ENCODE measurements at regions of chr22 and their contacts with region 1.

Region 1: DNA sequence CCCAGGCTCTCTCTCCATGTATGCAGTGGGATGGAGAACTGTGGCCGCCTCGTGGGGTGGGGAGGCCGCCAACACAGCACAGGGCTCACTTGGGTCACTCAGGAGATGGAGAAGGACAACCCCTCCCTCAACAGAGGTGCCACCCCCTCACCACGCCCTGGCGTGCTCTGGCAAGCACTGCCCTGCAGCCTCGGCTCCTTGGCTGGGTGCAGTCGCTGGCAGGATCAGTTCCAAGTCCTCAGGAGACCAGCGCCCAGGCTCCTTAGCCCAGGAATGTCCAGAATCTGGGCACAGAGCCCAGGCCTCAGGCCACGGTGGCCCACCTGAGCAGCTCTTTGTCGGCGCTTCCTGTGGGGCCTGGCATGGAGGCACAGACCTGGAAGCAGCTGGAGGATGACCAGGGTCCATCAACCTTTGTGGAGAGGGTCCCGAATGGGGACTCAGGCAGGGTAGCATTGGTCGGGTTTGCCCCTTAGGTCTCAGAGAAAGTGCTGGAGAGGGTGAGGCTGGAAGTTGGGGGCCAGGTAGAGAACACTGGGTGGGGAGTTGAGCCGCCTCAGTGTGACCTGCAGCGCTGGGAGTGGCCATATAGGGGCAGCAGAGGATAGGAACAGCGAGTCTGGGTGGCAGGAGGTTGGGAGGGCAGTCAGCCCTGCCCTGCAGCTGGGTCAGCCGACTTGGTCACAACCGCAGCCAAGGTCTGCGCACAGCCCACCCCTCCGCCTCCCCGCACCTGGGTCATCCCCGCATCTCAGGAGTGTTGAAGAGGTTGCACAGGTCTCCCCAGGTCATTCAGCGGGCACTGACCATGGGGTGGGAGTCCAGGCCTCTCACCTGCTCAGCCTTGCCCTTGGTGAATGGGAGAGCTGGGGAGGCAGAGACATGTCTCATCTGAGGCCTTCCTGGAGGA is 8.2 kb downstream of the SUSD2 start:
- DNase-seq: peak; percentile 79
- H3K4me3 ChIP-seq: peak overlapping the region; percentile 32
- H3K27ac ChIP-seq: peak overlapping the region; percentile 38
- H3K4me1 ChIP-seq: peaks cover 20% of the 10 kb centered on the region
- H3K27me3 ChIP-seq: no peaks in the 10 kb centered on the region
- CTCF ChIP-seq: peak; percentile 92

Region 2: GRCh38 chr22:24247011-24247507 is 57.6 kb after region 1 on chr22:
- intact Hi-C with region 1: loop called (anchors 5 kb)
- DNase-seq: no peak
- H3K4me3 ChIP-seq: no peak overlapping the region
- H3K27ac ChIP-seq: peak overlapping the region; percentile 97
- H3K4me1 ChIP-seq: peaks cover 46% of the 10 kb centered on the region
- H3K27me3 ChIP-seq: no peaks in the 10 kb centered on the region
- CTCF ChIP-seq: no peak

Region 3: GRCh38 chr22:24367841-24368240 is 178.3 kb after region 1 on chr22:
- intact Hi-C with region 1: no loop called
- DNase-seq: no peak
- H3K4me3 ChIP-seq: no peak overlapping the region
- H3K27ac ChIP-seq: no peak overlapping the region
- H3K4me1 ChIP-seq: peaks cover 21% of the 10 kb centered on the region
- H3K27me3 ChIP-seq: no peaks in the 10 kb centered on the region
- CTCF ChIP-seq: no peak

Measured in left ventricle myocardium inferior (tissue), 1 donor.